ENCODE measurements at regions of chr19 and their contacts with region 1.

Region 1: GRCh38 chr19:9078651-9079050 is 8.2 kb upstream of the OR1M1 start:
- DNase-seq: no peak
- H3K4me3 ChIP-seq: no peak overlapping the region
- H3K27ac ChIP-seq: no peak overlapping the region
- H3K4me1 ChIP-seq: no peaks in the 10 kb centered on the region
- H3K27me3 ChIP-seq: no peaks in the 10 kb centered on the region
- CTCF ChIP-seq: no peak
- POLR2A ChIP-seq: no peak

Region 2: GRCh38 chr19:8654591-8655339 is 423.9 kb before region 1 on chr19:
- intact Hi-C with region 1: loop called (anchors 2 kb)
- DNase-seq: no peak
- H3K4me3 ChIP-seq: no peak overlapping the region
- H3K27ac ChIP-seq: no peak overlapping the region
- H3K4me1 ChIP-seq: no peaks in the 10 kb centered on the region
- H3K27me3 ChIP-seq: no peaks in the 10 kb centered on the region
- CTCF ChIP-seq: peak; percentile 86 to 96 (median 91)
- POLR2A ChIP-seq: no peak

Region 3: GRCh38 chr19:9037390-9038062 is 41.1 kb before region 1 on chr19:
- intact Hi-C with region 1: no loop called
- DNase-seq: no peak
- H3K4me3 ChIP-seq: no peak overlapping the region
- H3K27ac ChIP-seq: no peak overlapping the region
- H3K4me1 ChIP-seq: no peaks in the 10 kb centered on the region
- H3K27me3 ChIP-seq: no peaks in the 10 kb centered on the region
- CTCF ChIP-seq: no peak
- POLR2A ChIP-seq: no peak

Region 4: GRCh38 chr19:9140159-9140874 is 61.7 kb after region 1 on chr19 and contains the start of gene ZNF317:
- intact Hi-C with region 1: no loop called
- DNase-seq: peak; percentile 92
- H3K4me3 ChIP-seq: peak within 1 kb of the TSS; percentile 57 to 66
- H3K27ac ChIP-seq: peak within 1 kb of the TSS; percentile 71 to 84
- H3K4me1 ChIP-seq: no peaks in the 10 kb centered on the region
- H3K27me3 ChIP-seq: no peaks in the 10 kb centered on the region
- CTCF ChIP-seq: no peak
- POLR2A ChIP-seq: peak; percentile 56
- total RNA-seq, gene ZNF317: 18.3 to 22.9 TPM

Measured in prostate gland (tissue), 2 donors.